A549 (cell line): ENCODE measurements at regions of chr20 and their contacts with region 1.

Region 1: DNA sequence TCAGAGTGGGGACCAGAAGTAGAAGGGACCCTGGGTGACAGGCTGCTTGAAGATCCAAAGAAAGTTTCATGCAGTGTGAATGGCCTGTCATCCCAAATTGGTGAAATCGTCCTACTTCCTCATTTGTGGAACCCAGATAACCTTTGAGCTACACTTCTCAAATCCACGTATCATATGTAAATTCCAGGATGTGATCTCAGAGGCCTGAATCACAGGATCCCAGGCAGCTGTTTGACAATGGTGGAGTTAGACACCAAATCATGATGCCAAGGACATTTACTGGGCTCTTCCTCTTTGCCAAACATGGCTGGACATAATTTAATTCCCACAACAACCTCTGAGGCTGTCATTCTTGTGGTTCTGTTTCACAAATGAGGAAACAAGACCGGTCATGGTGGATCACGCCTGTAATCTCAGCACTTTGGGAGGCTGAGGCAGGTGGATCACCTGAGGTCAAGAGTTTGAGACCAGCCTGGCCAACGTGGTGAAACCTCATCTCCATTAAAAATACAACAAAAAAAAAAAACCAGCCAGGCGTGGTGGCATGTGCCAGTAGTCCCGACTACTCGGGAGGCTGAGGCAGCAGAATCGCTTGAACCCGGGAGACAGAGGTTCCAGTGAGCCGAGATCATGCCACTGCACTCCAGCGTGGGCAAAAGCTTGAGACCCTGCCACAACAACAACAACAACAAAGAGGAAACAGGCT is 39.9 kb upstream of the TTPAL start:
- DNase-seq: peak in 1 of 2 experiments; percentile 52
- ATAC-seq: peak; percentile 23 to 30; a peak in 3 of 6 replicates
- H3K4me3 ChIP-seq: no peak overlapping the region
- H3K27ac ChIP-seq: peak overlapping the region; percentile 27 to 34; a peak in 2 of 6 replicates
- H3K4me1 ChIP-seq: peaks cover 6% of the 10 kb centered on the region
- CTCF ChIP-seq: no peak
- EP300 ChIP-seq: no peak
- POLR2A ChIP-seq: no peak
- RAD21 ChIP-seq: no peak

Region 2: DNA sequence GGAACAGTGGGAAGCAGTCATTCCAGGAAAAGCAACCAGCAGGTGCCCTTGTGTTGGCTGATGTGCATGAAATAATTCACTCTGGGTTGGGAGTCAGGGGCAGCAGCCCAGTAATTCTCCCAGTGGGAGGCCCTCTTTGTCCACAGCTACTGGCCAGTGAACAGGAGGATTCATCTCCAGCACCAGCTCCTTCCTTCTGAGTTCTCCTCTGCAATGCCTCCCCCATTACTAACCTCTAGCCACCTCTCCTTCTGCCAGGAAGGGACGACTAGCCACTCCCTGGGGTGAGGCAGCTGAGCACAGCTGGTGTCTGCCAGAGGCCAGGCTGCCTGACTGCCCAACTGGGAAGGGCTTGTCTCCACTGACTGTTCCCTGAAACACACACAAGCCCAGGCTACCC is 111.4 kb before region 1 on chr20:
- CTCF ChIA-PET with region 1: no interaction called
- POLR2A ChIA-PET with region 1: no interaction called
- DNase-seq: peak in 1 of 2 experiments; percentile 68
- ATAC-seq: peak; percentile 87 to 92; a peak in 5 of 6 replicates
- H3K4me3 ChIP-seq: no peak overlapping the region
- H3K27ac ChIP-seq: peak overlapping the region; percentile 51 to 73; a peak in 5 of 6 replicates
- H3K4me1 ChIP-seq: peaks cover 14% of the 10 kb centered on the region
- CTCF ChIP-seq: no peak
- EP300 ChIP-seq: no peak
- POLR2A ChIP-seq: no peak
- RAD21 ChIP-seq: no peak

Region 3: DNA sequence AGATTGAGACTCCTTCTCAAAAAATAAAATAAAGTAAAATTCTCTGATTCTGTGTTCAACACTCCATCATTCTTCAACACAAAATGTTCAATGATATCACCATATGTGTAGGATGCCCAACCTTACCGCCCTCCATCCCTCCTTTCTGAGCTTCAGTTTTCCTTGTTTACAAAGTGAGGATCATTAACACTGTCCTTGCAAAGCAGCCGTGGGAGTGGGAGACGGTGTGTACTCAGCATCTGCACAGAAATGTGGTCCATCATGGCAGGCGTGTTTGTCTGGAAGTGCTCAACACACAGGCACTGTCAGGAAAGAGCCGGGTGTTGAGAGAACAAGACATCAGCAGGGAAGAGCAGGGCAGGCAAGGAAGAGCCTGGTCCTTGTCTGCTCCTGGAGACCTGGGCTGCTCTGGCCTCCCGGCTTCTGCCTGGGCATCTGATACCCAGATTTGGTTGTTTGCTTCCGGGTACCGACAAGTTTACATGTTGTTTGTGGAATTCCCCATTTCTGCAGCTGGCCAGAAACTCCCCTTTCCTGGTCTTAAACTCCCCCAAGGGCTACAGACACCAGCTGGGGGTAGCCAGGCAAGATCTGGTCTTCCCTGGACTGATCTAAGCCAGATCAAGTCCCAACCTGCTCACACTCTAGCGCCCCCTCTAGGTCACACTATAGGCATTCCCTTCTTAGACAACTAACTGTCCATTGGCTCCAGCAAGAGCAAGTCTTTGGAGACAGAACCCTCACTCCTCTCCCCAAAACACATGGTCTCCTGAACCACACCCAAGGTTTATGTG is 13.2 kb after region 1 on chr20:
- CTCF ChIA-PET with region 1: interaction called, 10 read pairs
- POLR2A ChIA-PET with region 1: no interaction called
- DNase-seq: peak in 1 of 2 experiments; percentile 61
- ATAC-seq: peak; percentile 44 to 67; a peak in 3 of 6 replicates
- H3K4me3 ChIP-seq: no peak overlapping the region
- H3K27ac ChIP-seq: no peak overlapping the region
- H3K4me1 ChIP-seq: no peaks in the 10 kb centered on the region
- CTCF ChIP-seq: peak; percentile 24; the same call in 1 of the 3 replicates
- EP300 ChIP-seq: no peak
- POLR2A ChIP-seq: no peak
- RAD21 ChIP-seq: no peak

Region 4: DNA sequence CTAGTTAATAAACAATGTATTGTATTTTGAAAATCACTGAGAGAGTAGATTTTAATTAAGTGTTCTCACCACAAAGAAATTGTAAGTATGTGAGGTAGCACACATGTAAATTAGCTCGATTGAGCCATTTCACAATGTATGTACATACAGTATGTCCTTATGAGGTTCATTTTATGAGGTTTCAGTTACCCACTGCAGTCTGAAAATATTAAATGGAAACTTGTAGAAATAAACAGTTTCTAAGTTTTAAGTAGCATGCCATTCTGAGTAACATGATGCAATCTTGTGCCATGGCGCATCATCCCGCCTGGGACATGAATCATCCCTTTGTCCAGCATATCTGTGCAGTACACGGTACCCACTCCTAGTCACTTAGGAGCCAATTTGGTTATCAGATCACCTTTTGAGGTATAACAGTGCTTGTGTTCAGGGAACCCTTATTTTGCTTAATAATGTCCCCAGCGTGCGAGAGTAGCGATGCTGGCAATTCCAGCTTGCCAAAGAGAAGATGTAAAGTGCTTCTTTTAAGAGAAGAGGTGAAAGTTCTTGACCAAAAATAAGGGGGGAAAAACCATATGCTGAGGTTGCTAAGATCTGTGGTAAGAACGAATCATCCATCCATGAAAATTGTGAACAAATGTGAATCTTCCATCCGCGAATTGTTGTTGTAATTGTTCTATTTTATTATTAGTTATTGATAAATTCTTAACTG is 600.4 kb after region 1 on chr20:
- CTCF ChIA-PET with region 1: no interaction called
- POLR2A ChIA-PET with region 1: no interaction called
- DNase-seq: peak in 1 of 2 experiments; percentile 56
- ATAC-seq: peak; percentile 49 to 71; a peak in 2 of 6 replicates
- H3K4me3 ChIP-seq: no peak overlapping the region
- H3K27ac ChIP-seq: peak overlapping the region; percentile 67 to 84
- H3K4me1 ChIP-seq: peaks cover 39% of the 10 kb centered on the region
- CTCF ChIP-seq: no peak
- EP300 ChIP-seq: no peak
- POLR2A ChIP-seq: no peak
- RAD21 ChIP-seq: no peak